Activated naive CD4-positive, alpha-beta T cell treated with anti-CD3 and anti-CD28 coated beads for 36 hours (primary cell): ENCODE measurements at regions of chr14 and their contacts with region 1.

Region 1: DNA sequence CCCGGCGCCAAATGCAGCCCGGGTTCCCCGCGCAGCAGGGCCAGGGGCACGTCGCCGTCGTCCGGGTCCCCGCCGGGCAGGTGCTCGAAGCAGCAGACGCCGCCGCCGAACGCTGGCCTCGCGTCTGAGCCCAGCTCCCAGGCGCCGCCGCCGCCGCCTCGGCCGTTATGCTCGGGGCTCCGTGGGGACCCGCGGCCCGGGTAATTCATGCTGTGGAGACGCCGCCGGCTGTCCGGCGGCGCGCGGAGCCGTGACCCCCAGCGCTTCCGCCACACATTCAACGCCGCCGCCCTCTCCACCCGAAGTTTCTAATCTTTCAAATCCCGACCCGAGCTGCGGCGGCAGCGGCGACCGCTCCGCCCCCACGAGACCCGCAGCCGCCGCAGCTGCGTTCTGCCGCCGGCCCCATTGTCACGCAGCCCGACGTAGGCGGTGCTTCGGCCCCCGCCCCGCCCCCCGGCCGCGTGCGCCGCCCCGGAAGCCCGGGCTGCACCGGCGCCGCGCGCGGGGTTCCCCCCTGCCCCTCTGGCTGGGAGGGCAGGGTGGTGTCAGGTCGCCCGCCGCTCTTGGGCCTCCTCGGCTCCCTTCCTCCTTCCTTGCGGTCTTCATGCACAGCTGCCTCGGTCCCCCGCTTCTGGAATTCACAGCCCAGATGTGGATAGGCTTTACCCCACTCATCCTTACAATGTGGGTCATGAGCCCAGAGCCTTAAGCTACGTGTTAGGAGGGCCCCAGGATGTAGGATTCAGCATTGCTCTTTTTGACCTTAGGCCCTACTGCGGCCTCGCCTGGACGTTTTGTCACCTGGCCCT is at the start of gene DDHD1:
- DNase-seq: peak; percentile 82
- H3K4me3 Mint-ChIP-seq: peak within 1 kb of the TSS; percentile 100
- H3K27ac Mint-ChIP-seq: peak within 1 kb of the TSS; percentile 95
- H3K4me1 Mint-ChIP-seq: peaks cover 36% of the 10 kb centered on the region
- H3K27me3 Mint-ChIP-seq: no peaks in the 10 kb centered on the region
- total RNA-seq, gene DDHD1: 20.1 to 20.4 TPM

Region 2: GRCh38 chr14:52706724-52707706 is 446.1 kb before region 1 on chr14 and contains the start of gene PSMC6:
- CTCF ChIA-PET with region 1: interaction called, 3 read pairs
- intact Hi-C with region 1: loop called (anchors 1 kb)
- DNase-seq: peak; percentile 97
- H3K4me3 Mint-ChIP-seq: peak within 1 kb of the TSS; percentile 100
- H3K27ac Mint-ChIP-seq: peak within 1 kb of the TSS; percentile 97
- H3K4me1 Mint-ChIP-seq: peaks cover 47% of the 10 kb centered on the region
- H3K27me3 Mint-ChIP-seq: no peaks in the 10 kb centered on the region
- total RNA-seq, gene PSMC6: 103 to 114 TPM

Region 3: DNA sequence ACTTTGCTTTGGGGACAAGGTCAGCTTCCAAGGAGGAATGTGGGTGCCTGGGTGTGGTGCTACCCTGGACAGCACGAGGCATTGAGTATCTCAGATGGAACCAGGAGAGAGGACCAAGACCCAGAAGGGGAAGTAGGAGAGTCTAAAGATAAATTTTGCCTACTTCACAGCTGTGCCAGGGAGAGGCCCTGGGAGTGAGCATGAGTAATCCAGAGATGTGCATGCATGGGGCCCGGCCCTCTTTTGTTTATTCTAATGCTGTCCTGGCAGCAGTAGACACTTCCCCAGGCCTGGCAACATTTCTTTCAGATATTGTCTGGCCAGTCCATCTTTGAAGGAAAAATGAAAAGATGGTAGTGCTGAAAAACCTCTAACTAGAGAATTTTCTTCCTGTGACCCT is 312.2 kb before region 1 on chr14:
- CTCF ChIA-PET with region 1: no interaction called
- intact Hi-C with region 1: no loop called
- DNase-seq: peak; percentile 6
- H3K4me3 Mint-ChIP-seq: no peak overlapping the region
- H3K27ac Mint-ChIP-seq: no peak overlapping the region
- H3K4me1 Mint-ChIP-seq: no peaks in the 10 kb centered on the region
- H3K27me3 Mint-ChIP-seq: no peaks in the 10 kb centered on the region

Region 4: DNA sequence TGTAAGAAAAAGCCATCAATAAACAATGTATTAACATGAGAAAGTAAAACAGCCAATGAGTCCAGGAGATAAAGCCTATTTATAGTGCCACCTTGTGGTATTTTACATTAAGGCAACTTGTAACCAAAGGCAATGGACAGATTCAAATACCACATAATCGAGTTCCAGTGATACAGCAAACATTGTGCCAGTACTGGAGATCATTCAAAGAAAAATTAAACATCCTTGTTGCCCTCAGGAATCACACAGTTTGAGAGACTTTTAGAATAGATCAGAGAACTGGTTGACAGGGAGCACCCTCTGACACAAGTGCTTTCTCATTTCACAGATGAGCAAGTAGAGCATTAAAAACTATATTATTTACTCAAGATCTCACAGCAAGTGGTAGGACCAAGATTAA is 98.1 kb before region 1 on chr14:
- CTCF ChIA-PET with region 1: interaction called, 5 read pairs
- intact Hi-C with region 1: loop called (anchors 2 kb)
- DNase-seq: no peak
- H3K4me3 Mint-ChIP-seq: no peak overlapping the region
- H3K27ac Mint-ChIP-seq: no peak overlapping the region
- H3K4me1 Mint-ChIP-seq: peaks cover 3% of the 10 kb centered on the region
- H3K27me3 Mint-ChIP-seq: no peaks in the 10 kb centered on the region

Region 5: GRCh38 chr14:53180268-53181221 is 27.4 kb after region 1 on chr14:
- CTCF ChIA-PET with region 1: interaction called, 4 read pairs
- intact Hi-C with region 1: loop called (anchors 1 kb)
- DNase-seq: peak; percentile 86
- H3K4me3 Mint-ChIP-seq: no peak overlapping the region
- H3K27ac Mint-ChIP-seq: peak overlapping the region; percentile 43
- H3K4me1 Mint-ChIP-seq: peaks cover 21% of the 10 kb centered on the region
- H3K27me3 Mint-ChIP-seq: no peaks in the 10 kb centered on the region

Region 6: GRCh38 chr14:53278930-53279506 is 125.9 kb after region 1 on chr14:
- CTCF ChIA-PET with region 1: no interaction called
- intact Hi-C with region 1: no loop called
- DNase-seq: no peak
- H3K4me3 Mint-ChIP-seq: no peak overlapping the region
- H3K27ac Mint-ChIP-seq: no peak overlapping the region
- H3K4me1 Mint-ChIP-seq: no peaks in the 10 kb centered on the region
- H3K27me3 Mint-ChIP-seq: no peaks in the 10 kb centered on the region

Region 7: GRCh38 chr14:53306267-53306721 is 153.2 kb after region 1 on chr14:
- CTCF ChIA-PET with region 1: no interaction called
- intact Hi-C with region 1: loop called (anchors 5 kb)
- DNase-seq: peak; percentile 60
- H3K4me3 Mint-ChIP-seq: peak overlapping the region; percentile 55
- H3K27ac Mint-ChIP-seq: no peak overlapping the region
- H3K4me1 Mint-ChIP-seq: peaks cover 6% of the 10 kb centered on the region
- H3K27me3 Mint-ChIP-seq: peaks cover 4% of the 10 kb centered on the region

Region 8: DNA sequence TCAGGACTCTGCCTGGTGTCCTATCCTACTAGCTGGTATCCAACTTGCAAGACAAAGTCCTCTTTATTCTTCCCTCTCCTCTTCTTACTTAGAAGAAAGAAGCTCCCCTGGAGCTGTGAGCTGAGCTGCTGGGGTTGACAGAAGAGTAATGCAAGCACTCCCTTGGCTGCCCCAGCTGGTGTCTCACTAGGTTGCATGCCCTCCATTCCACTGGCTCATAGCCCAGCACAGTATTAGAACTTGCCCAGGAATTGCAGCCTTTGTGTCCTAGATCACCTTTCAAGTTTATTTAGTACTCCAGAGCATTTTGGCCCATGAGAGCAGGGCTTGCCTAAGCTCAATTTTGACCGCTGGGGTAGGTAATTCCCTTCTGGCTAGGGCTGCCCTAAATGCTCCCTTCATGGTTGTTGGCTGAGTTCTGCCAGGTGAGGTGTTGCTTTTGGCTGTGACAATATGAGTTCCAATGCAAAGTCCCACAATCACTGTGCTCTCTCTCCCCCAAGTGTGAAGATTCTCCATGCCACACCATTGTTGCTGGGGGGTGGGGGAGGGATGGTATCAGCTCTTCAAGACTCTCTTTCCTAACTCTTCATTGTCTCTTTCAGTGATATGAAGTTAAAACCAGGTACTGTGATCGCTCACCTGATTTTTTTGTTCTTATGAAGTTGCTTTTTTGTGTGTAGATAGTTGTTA is 317.4 kb after region 1 on chr14:
- CTCF ChIA-PET with region 1: no interaction called
- intact Hi-C with region 1: no loop called
- DNase-seq: no peak
- H3K4me3 Mint-ChIP-seq: no peak overlapping the region
- H3K27ac Mint-ChIP-seq: no peak overlapping the region
- H3K4me1 Mint-ChIP-seq: no peaks in the 10 kb centered on the region
- H3K27me3 Mint-ChIP-seq: peaks cover 4% of the 10 kb centered on the region